Gastrocnemius medialis (tissue), 4 donors: ENCODE measurements at regions of chr6 and their contacts with region 1.

Region 1: GRCh38 chr6:111483736-111484632 is 966 bp upstream of the REV3L start:
- DNase-seq: peak; percentile 89 to 92
- ATAC-seq: peak; percentile 57 to 68
- H3K4me3 ChIP-seq: peak overlapping the region; percentile 79 to 96 (median 88)
- H3K27ac ChIP-seq: peak overlapping the region; percentile 95 to 100 (median 99)
- H3K4me1 ChIP-seq: peaks cover 38 to 41% of the 10 kb centered on the region in 2 donors
- H3K27me3 ChIP-seq: no peaks in the 10 kb centered on the region
- CTCF ChIP-seq: no peak
- POLR2A ChIP-seq: peak; percentile 93 to 98

Region 2: DNA sequence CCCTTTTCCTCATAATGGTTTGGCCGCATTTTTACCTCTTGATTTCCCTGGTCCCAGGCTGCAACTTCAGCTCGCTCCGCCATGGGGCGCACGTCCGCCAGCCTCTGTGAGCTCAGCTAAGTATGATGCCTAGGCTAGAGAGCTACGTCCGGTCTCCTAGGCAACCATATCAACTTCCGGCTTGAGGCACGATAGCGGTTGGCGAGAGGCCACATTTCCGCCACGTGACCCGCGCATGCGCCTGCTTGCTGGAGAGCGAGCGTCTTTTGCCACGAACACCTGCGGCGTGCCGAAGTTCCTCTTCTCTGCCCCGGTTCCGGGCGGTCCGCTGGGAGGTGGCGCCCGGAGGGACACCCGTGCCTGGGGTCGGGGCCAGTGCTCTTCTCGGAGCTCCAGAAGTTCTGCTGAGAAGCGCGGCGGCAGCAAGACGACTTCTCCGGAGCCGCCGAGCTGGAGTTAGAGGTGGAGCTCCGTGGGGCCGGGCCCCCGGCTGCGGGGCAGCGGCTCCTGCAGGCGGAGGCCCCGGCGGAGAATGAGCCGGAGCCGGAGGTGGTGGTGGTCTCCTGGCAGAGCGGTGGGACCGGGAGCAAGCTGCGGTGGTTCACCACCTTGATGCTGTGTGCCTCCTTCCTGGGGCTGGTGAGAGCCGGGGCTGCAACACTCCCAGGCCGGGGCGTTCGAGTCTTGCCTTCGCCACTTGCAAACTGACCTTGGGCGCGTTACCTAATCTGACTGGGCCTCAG is 224.7 kb before region 1 on chr6:
- in situ Hi-C with region 1: no loop called
- intact Hi-C with region 1: loop called (anchors 2 kb)
- DNase-seq: peak; percentile 98 to 99
- ATAC-seq: peak; percentile 99
- H3K4me3 ChIP-seq: peak overlapping the region; percentile 69 to 99 (median 86)
- H3K27ac ChIP-seq: peak overlapping the region; percentile 84 to 97 (median 91)
- H3K4me1 ChIP-seq: peaks cover 12 to 14% of the 10 kb centered on the region in 2 donors
- H3K27me3 ChIP-seq: no peaks in the 10 kb centered on the region
- CTCF ChIP-seq: peak; percentile 94 to 97 (median 95)
- POLR2A ChIP-seq: peak; percentile 69 to 72

Region 3: GRCh38 chr6:111515259-111515658 is 31.3 kb after region 1 on chr6:
- in situ Hi-C with region 1: no loop called
- intact Hi-C with region 1: no loop called
- DNase-seq: no peak
- ATAC-seq: no peak
- H3K4me3 ChIP-seq: no peak overlapping the region
- H3K27ac ChIP-seq: no peak overlapping the region
- H3K4me1 ChIP-seq: peaks cover 0 to 3% of the 10 kb centered on the region in 2 donors
- H3K27me3 ChIP-seq: no peaks in the 10 kb centered on the region
- CTCF ChIP-seq: no peak
- POLR2A ChIP-seq: no peak

Region 4: DNA sequence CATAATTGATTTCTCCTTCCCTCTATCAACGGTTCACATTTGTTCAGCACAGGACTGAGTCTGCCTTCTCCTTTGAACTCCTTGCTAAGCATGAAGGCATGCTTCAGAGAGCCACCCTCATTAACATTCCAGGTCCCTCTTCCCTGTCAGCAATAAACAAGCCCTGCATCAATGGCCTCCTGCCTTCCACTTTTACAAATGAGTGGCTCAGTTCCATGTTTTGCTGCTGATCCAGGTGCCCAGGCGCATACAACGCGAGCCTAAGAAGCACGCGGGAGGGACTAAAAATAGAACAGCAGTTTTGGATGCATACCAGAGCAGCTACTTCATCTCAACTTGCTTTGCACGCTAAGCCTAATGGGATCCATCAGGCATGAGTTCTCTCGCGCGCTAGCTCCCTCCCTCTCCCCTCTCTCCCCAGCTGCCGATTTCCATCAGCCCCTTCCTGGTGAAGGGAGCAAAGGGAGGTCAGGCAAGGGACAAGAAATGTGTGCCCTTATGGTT is 68.3 kb after region 1 on chr6:
- in situ Hi-C with region 1: no loop called
- intact Hi-C with region 1: loop called (anchors 1 kb)
- DNase-seq: peak; percentile 86 to 92
- ATAC-seq: peak; percentile 95 to 97
- H3K4me3 ChIP-seq: peak overlapping the region in 2 of 4 donors; percentile 3 to 14
- H3K27ac ChIP-seq: peak overlapping the region; percentile 83 to 89 (median 86)
- H3K4me1 ChIP-seq: peaks cover 42 to 56% of the 10 kb centered on the region in 2 donors
- H3K27me3 ChIP-seq: no peaks in the 10 kb centered on the region
- CTCF ChIP-seq: no peak
- POLR2A ChIP-seq: no peak

Region 5: GRCh38 chr6:111565326-111566221 is 81.6 kb after region 1 on chr6:
- in situ Hi-C with region 1: no loop called
- intact Hi-C with region 1: no loop called
- DNase-seq: peak in 1 of 2 donors; percentile 53
- ATAC-seq: peak; percentile 21 to 37
- H3K4me3 ChIP-seq: no peak overlapping the region
- H3K27ac ChIP-seq: peak overlapping the region; percentile 58 to 83 (median 74)
- H3K4me1 ChIP-seq: peaks cover 42 to 57% of the 10 kb centered on the region in 2 donors
- H3K27me3 ChIP-seq: no peaks in the 10 kb centered on the region
- CTCF ChIP-seq: peak in 1 of 5 experiments; percentile 49
- POLR2A ChIP-seq: no peak

Region 6: DNA sequence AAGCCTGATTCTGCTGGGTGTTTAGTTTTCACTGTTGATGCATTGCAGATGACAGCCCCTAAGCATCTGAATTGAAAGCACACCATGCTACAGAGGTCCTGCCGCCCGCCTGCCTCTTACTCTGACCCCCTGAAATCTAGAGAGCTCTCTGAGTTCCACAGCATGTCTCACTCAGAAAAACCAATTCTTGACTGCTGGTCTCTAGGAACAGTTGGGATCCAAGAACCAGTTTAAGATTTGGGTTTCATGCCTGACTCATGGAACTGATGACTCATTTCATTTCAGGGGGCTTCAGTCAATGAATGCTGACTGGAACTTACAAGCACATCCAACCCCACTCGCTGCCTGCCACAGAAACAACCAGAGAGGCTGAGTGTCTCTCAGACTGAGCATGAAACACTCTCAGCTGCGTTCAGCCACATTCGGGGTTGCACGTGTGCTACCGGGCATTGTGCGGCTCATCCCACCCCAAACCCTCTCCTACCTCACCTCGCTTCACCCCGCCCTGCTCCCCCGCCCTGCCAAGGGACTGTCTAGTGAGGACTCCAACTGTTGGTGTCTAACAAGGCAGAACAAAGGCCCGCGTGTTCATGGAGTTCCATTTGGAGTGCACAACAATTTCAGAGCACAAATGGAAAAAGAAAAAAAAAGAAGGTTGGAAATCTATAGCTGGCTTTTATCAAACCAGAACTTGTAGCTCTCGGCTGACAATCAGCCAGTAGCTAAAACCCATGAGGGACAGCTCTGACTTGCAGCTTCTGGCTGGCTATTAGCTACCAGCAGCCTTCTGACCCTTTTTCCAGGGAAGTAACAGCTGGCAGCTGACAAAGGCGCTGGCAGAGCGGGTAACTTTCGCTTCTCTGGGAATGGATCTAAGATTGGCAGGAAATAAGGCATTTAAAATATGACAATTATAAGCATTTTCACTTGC is 141.7 kb after region 1 on chr6:
- in situ Hi-C with region 1: no loop called
- intact Hi-C with region 1: loop called (anchors 5 kb)
- DNase-seq: peak; percentile 55 to 76
- ATAC-seq: peak; percentile 87 to 94
- H3K4me3 ChIP-seq: peak overlapping the region; percentile 40 to 52 (median 48)
- H3K27ac ChIP-seq: peak overlapping the region; percentile 70 to 77 (median 74)
- H3K4me1 ChIP-seq: peaks cover 19 to 38% of the 10 kb centered on the region in 2 donors
- H3K27me3 ChIP-seq: no peaks in the 10 kb centered on the region
- CTCF ChIP-seq: no peak
- POLR2A ChIP-seq: no peak

Region 7: GRCh38 chr6:111663692-111664564 is 179.9 kb after region 1 on chr6:
- in situ Hi-C with region 1: no loop called
- intact Hi-C with region 1: loop called (anchors 2 kb)
- DNase-seq: peak; percentile 56 to 77
- ATAC-seq: peak; percentile 63 to 64
- H3K4me3 ChIP-seq: peak overlapping the region; percentile 12 to 52 (median 22)
- H3K27ac ChIP-seq: peak overlapping the region; percentile 88 to 96 (median 95)
- H3K4me1 ChIP-seq: peaks cover 78 to 83% of the 10 kb centered on the region in 2 donors
- H3K27me3 ChIP-seq: no peaks in the 10 kb centered on the region
- CTCF ChIP-seq: peak in 1 of 5 experiments; percentile 6
- POLR2A ChIP-seq: peak; percentile 11 to 59

Region 8: DNA sequence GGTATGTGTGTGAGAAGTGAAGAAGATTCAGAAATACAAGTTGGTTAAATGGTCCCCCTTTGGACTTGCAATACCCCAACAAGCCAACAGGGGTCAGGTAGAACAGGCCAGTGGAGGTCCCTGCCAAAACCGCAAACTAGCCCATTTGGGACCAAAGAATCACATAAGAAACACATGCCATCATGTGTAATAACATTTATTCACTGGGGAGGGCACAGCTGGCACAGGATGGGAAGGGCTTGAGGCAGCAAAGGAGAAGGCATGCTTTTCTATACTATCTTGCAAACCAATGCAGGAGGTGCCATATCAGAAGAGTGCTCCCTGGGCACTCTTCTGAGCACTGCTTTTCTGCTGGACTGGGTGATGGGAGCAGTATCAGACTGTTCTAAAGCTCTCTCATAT is 237.8 kb after region 1 on chr6:
- in situ Hi-C with region 1: no loop called
- intact Hi-C with region 1: no loop called
- DNase-seq: peak in 1 of 2 donors; percentile 39
- ATAC-seq: no peak
- H3K4me3 ChIP-seq: no peak overlapping the region
- H3K27ac ChIP-seq: peak overlapping the region in 3 of 4 donors; percentile 9 to 59 (median 25)
- H3K4me1 ChIP-seq: peaks cover 11 to 16% of the 10 kb centered on the region in 2 donors
- H3K27me3 ChIP-seq: no peaks in the 10 kb centered on the region
- CTCF ChIP-seq: peak in 3 of 5 experiments; percentile 29 to 37 (median 37)
- POLR2A ChIP-seq: no peak